ENCODE measurements at regions of chr6 and their contacts with region 1.

Region 1: DNA sequence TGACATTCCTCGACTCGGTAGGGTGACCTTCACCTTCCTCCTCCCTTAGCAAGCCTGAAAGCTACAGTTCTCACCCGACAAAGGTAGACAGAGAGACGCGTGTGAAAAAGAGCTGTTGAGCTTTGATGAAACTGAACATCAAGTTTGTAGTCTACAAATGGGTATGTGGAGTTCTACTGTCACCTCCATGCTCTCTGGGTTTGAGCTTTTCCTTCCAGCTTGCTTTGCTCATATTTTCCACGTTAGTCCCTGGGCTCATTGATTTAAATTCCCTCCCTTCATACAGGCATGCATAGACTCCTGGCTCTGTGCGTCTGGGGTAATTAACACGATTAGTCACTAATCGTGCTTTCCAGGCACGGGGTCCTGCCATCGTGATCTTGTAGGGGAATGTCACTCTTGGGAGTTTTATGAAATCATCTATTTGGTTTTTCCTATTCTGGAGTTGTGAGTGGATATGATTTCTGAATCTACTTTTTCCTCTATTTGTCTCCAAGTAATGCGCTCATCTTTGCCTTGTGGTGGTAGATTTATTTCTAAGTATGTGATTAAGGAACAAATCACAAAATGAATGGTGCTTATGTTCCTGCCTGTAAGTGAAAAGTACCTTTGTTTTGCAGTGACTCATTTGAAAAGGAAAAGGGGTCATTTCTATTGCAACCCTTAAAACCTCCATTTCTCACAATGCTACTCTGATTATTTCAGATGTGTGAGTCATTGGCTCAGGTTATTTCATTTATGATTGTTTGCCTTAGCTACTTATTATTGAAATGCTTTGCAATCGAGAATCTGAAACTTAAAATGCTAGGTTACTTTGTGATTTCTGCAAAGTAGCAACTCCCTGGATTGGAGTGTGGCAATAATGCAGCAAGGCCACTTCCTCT is 154.6 kb downstream of the ZDHHC14 start:
- DNase-seq: peak; percentile 76
- H3K4me3 Mint-ChIP-seq: peak overlapping the region; percentile 67
- H3K27ac Mint-ChIP-seq: peak overlapping the region; percentile 80
- H3K4me1 Mint-ChIP-seq: peaks cover 49% of the 10 kb centered on the region
- H3K27me3 Mint-ChIP-seq: peaks cover 8% of the 10 kb centered on the region

Region 2: DNA sequence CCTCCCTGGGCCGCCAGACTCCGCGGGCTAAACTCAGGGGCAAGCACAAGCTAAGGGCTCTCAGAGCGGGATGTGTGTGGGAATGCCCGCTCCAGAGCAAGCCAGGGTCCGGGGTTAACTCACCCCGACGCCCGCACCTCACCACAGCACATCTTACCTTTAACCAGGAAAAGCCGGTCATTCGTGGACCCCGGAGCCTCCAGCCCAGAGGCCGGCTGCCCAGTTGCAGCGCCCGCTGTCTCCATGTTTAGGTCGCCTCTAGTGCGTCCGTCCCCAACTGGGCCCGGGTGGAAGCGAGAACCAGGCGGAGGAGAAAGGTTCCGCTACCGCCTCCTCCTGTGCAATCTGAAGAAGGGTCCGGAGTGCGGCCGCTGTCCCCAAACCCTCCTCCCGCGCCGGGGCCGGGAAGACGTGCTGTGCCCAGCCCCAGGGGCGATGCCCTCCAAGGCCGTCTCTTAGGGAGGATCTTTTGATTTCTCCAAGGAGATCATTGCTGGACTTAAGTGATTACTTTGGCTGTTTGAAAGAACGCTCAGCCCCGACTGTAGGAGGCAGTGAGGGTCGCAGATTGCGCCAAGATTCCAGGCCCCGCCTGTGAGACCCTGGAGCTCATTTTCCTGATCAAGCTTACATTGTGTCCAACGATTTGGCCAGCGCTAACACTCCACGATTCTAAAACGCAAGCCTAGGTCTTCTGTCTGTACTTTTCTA is 212.2 kb before region 1 on chr6 and contains the start of gene TMEM242:
- intact Hi-C with region 1: loop called (anchors 1 kb)
- DNase-seq: peak; percentile 97
- H3K4me3 Mint-ChIP-seq: peak within 1 kb of the TSS; percentile 94
- H3K27ac Mint-ChIP-seq: peak within 1 kb of the TSS; percentile 92
- H3K4me1 Mint-ChIP-seq: peaks cover 39% of the 10 kb centered on the region
- H3K27me3 Mint-ChIP-seq: peaks cover 21% of the 10 kb centered on the region
- total RNA-seq, gene TMEM242: 10.1 and 10.7 TPM in 2 replicates

Region 3: GRCh38 chr6:157358287-157358686 is 177.3 kb before region 1 on chr6:
- intact Hi-C with region 1: no loop called
- DNase-seq: no peak
- H3K4me3 Mint-ChIP-seq: no peak overlapping the region
- H3K27ac Mint-ChIP-seq: no peak overlapping the region
- H3K4me1 Mint-ChIP-seq: no peaks in the 10 kb centered on the region
- H3K27me3 Mint-ChIP-seq: peaks cover 46% of the 10 kb centered on the region

Region 4: GRCh38 chr6:157368359-157369049 is 167.1 kb before region 1 on chr6:
- intact Hi-C with region 1: loop called (anchors 1 kb)
- DNase-seq: no peak
- H3K4me3 Mint-ChIP-seq: no peak overlapping the region
- H3K27ac Mint-ChIP-seq: no peak overlapping the region
- H3K4me1 Mint-ChIP-seq: peaks cover 16% of the 10 kb centered on the region
- H3K27me3 Mint-ChIP-seq: peaks cover 59% of the 10 kb centered on the region

Region 5: DNA sequence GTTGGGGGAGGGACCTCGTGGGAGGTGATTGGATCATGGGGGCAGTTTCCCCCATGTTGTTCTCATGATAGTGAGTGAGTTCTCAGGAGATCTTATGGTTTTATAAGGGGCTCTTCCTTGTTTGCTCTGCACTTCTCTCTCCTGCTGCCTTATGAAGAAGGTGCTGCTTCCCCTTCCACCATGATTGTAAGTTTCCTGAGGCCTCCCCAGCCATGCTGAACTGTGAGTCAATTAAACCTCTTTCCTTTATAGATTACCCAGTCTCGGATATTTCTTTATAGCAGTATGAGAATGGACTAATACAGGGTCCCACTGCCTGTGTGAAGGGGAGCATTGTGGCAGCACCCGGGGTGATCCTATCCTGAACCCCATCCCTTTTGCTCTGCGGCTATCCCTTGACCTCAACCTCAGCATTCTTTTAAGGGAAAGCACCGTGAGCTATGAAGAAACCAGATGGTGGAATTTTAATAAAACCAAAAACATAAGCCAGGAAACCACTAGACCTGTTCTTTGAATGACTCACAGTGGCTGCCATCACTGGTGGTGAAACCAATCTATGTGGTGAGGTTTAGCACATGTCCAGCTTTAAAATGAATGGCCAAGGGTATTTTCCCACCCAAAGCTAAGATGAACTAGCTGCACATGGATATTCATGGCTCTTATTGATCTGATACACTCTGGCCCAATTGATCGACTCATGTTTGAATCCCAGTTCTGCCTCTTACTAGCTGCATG is 92.3 kb before region 1 on chr6:
- intact Hi-C with region 1: loop called (anchors 5 kb)
- DNase-seq: peak; percentile 67
- H3K4me3 Mint-ChIP-seq: no peak overlapping the region
- H3K27ac Mint-ChIP-seq: peak overlapping the region; percentile 74
- H3K4me1 Mint-ChIP-seq: peaks cover 19% of the 10 kb centered on the region
- H3K27me3 Mint-ChIP-seq: no peaks in the 10 kb centered on the region

Region 6: GRCh38 chr6:157486572-157486971 is 49.0 kb before region 1 on chr6:
- intact Hi-C with region 1: no loop called
- DNase-seq: peak; percentile 80
- H3K4me3 Mint-ChIP-seq: peak overlapping the region; percentile 70
- H3K27ac Mint-ChIP-seq: peak overlapping the region; percentile 91
- H3K4me1 Mint-ChIP-seq: peaks cover 33% of the 10 kb centered on the region
- H3K27me3 Mint-ChIP-seq: peaks cover 4% of the 10 kb centered on the region

Region 7: GRCh38 chr6:157569543-157569942 is 34.0 kb after region 1 on chr6:
- intact Hi-C with region 1: loop called (anchors 1 kb)
- DNase-seq: peak; percentile 71
- H3K4me3 Mint-ChIP-seq: peak overlapping the region; percentile 54
- H3K27ac Mint-ChIP-seq: no peak overlapping the region
- H3K4me1 Mint-ChIP-seq: peaks cover 23% of the 10 kb centered on the region
- H3K27me3 Mint-ChIP-seq: peaks cover 5% of the 10 kb centered on the region

Measured in activated CD4-positive, alpha-beta T cell treated with anti-CD3 and anti-CD28 coated beads, Interleukin-2, amount 10 ng/mL, durations not matched to agents 24 days and 14 days (primary cell).